AG04450 (cell line): ENCODE measurements at regions of chr10 and their contacts with region 1.

Region 1: DNA sequence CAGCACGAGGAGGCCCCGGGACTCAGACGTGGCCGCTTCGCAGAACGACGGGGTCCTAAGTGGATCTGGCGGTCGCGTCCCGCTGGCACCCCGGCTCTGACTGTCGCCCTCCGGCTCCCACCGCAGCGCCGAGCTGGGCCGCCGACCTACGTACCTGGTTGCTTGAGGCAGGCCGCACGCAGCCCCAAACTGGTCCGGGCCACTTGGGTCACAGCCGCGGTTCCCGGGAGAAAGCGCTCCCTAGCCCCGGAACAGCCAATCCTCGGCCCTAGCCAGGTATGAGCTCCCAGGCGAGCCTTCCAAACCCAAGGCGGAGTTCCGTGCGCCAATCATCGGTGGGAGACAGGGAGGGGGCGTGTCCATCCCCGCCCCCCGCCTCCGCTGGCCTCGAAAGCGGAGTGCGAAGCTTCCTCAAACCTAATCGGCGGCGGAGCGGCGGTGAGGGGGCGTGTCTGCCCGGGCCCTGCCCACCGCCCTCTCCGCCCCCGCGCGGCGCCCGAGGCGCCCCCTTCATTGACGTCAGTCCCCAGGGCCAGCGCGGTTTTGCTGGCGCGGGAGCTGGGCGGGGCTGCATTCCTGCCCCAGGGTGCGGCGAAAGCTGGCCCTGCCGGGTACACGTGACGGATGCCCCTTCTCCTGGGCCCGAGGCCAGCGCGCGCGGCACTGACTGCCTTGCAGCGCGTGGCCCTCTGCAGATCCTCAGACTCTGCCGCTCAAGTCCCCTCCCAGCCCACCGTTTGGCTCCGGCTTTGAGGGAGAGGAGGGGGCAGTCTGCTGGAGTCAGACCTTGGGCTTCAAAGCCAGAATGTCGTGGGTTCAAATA is at the start of gene AVPI1:
- DNase-seq: peak; percentile 91
- H3K4me3 ChIP-seq: peak within 1 kb of the TSS; percentile 71
- H3K27ac ChIP-seq: peak within 1 kb of the TSS; percentile 100
- H3K27me3 ChIP-seq: no peaks in the 10 kb centered on the region
- CTCF ChIP-seq: no peak
- polyA plus RNA-seq, gene AVPI1: 26.5 and 36.9 TPM in 2 replicates

Region 2: DNA sequence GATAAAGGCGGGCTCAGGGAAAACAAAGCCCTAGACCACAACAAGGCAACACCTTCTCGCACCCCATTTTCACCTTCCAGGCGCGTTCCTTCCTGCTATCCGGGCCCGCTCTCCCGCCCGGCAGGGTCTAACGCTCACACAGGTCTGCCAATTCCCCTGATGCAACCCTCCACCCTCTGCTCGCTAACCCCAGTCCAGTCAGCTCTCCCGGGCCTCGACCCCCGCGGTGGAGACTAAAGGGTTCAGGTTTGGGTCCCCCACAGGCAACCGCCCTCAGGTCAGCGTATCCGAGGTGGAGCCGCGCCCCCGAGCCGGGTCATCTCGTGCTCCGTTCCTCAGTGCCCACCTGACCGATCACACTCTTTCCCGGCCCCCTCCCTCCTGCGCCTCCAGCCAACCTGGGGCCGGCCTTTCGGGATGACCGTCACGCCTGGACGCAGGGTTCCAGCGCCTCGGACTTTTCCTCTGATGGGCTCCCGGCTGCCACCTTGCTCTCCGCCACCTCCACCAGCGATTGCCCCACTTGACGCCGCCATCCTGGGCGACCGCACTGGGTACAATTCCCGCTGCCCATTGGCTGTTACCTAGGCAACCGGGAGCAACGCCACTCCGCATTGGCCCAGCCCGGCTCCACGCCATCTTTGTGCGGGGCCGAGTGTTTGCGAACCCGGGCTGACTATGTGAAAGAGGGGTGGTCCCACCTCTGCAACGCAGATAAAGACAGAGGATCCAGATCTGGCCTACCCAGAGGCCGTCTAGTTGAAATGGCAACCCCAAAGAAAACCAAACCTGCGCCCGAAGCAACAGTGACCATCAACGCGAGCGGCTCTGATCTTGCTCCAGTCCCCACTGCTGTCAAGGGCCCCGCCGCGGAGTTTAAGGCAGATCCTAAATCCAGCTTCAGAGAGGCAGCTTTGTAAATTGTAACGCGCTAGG is 54.0 kb before region 1 on chr10 and contains the start of gene MORN4:
- CTCF ChIA-PET with region 1: no interaction called
- POLR2A ChIA-PET with region 1: no interaction called
- DNase-seq: peak; percentile 69
- H3K4me3 ChIP-seq: peak within 1 kb of the TSS; percentile 91
- H3K27ac ChIP-seq: peak within 1 kb of the TSS; percentile 3
- H3K27me3 ChIP-seq: no peaks in the 10 kb centered on the region
- CTCF ChIP-seq: no peak
- polyA plus RNA-seq, gene MORN4: 14.4 and 16.0 TPM in 2 replicates

Region 3: GRCh38 chr10:97648562-97649404 is 38.4 kb before region 1 on chr10:
- CTCF ChIA-PET with region 1: interaction called, 9 read pairs
- POLR2A ChIA-PET with region 1: interaction called, 10 read pairs
- DNase-seq: peak; percentile 59
- H3K4me3 ChIP-seq: no peak overlapping the region
- H3K27ac ChIP-seq: peak overlapping the region; percentile 67
- H3K27me3 ChIP-seq: no peaks in the 10 kb centered on the region
- CTCF ChIP-seq: no peak

Region 4: DNA sequence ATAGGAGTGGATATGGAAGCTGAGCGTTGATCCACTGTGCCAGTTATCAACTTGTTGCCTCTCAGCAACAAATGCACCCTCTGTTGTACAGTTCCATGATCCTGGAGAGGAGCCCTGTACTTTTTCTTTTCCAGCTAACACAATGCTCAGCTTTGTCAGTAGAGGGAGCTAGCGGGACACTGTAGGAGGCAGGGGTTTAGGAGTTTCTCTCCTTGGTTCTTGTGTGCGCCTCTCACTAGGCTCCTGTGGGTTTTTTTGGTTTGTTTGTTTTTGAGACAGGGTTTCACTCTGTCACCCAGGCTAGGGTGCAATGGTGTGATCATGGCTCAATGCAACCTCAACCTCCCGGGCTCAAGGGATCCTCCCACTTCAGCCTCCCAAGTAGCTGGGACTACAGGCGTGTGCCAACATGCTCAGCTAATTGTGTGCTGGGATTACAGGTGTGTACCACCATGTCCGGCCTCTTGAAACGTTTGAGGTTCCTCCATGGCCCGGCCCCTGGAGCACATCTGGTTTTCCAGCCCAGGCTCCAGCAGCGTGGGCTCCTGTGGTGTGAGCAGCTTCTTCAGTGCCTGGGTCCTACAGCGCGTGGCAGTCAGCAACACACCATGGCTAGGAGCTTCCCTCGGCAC is 14.4 kb after region 1 on chr10:
- CTCF ChIA-PET with region 1: interaction called, 71 read pairs
- POLR2A ChIA-PET with region 1: interaction called, 7 read pairs
- DNase-seq: peak; percentile 61
- H3K4me3 ChIP-seq: no peak overlapping the region
- H3K27ac ChIP-seq: no peak overlapping the region
- H3K27me3 ChIP-seq: no peaks in the 10 kb centered on the region
- CTCF ChIP-seq: peak; percentile 94

Region 5: DNA sequence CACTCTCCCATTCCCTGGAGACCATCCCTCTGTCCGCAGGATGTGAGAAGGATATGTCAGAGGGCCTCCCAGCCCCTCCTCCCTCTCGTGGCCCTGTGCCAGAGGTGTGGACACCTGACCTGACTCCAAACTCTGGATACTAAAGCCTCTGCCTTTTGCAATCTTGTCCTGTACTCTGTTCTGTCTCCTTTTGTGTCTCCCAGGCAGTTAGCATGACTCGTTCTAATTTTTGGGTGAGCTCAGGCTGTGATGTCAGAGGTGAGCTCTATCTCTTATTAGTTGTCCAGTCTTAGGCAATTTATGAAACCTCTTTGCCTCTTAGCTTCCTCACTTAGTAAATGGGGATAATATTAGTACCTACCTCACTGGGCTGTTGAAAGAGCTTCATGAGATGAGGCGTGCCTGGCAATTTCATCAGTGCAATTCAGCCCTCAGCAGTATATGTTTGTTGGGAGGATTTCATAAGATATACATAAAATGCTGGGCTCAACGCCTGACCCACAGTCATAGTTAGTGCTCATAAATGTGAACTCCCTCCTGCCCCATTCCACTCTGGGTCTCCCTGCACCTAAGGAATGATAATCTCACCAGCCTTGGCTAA is 37.3 kb after region 1 on chr10:
- CTCF ChIA-PET with region 1: interaction called, 4 read pairs
- POLR2A ChIA-PET with region 1: interaction called, 10 read pairs
- DNase-seq: no peak
- H3K4me3 ChIP-seq: no peak overlapping the region
- H3K27ac ChIP-seq: peak overlapping the region; percentile 31
- H3K27me3 ChIP-seq: no peaks in the 10 kb centered on the region
- CTCF ChIP-seq: no peak

Region 6: DNA sequence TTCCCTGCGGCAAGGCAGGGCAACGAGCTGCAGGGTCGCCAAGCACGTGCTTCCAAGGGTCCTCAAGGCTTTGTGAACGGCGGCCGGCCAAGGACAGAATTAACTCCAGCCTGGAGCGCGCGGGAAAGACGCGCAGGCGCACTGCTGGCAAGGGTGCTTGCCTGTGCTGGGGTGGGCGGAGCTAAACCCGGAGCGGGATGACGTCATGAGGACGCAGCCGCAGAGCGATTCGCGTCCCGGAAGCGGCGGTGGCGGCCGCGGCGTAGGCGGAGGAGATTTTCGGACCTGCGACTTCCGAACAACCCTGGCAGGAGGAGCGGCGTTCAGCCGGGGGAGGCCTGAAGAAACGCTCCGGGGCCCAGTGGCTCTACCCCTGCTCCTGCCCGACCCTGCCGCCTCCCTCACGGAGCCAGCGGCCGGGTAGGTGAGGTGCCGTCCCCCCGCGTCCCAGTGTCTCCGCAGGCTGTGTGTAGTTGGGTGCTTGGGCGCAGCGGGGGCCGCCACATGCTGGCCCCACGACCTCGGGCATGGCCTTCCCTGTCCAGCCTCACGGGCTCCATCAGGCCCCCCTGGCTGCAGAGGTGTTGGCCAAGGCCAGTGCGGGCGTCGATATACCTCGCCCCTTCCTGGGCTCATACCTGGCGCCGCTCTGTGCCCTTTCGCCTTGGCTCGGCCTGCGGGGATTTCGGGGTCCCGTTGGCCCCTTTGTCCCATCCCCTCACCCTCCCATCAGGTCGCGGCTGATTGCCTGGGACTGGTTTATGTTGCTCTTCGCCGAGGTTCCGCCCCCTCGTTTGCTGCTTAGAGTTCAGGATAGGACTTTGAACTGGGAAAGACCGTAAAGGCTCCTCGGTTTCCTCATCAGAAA is 50.0 kb after region 1 on chr10 and contains the start of gene ZFYVE27:
- CTCF ChIA-PET with region 1: interaction called, 31 read pairs
- POLR2A ChIA-PET with region 1: interaction called, 16 read pairs
- DNase-seq: peak; percentile 91
- H3K4me3 ChIP-seq: peak within 1 kb of the TSS; percentile 98
- H3K27ac ChIP-seq: peak within 1 kb of the TSS; percentile 91
- H3K27me3 ChIP-seq: no peaks in the 10 kb centered on the region
- CTCF ChIP-seq: no peak
- polyA plus RNA-seq, gene ZFYVE27: 11.1 and 13.5 TPM in 2 replicates

Region 7: DNA sequence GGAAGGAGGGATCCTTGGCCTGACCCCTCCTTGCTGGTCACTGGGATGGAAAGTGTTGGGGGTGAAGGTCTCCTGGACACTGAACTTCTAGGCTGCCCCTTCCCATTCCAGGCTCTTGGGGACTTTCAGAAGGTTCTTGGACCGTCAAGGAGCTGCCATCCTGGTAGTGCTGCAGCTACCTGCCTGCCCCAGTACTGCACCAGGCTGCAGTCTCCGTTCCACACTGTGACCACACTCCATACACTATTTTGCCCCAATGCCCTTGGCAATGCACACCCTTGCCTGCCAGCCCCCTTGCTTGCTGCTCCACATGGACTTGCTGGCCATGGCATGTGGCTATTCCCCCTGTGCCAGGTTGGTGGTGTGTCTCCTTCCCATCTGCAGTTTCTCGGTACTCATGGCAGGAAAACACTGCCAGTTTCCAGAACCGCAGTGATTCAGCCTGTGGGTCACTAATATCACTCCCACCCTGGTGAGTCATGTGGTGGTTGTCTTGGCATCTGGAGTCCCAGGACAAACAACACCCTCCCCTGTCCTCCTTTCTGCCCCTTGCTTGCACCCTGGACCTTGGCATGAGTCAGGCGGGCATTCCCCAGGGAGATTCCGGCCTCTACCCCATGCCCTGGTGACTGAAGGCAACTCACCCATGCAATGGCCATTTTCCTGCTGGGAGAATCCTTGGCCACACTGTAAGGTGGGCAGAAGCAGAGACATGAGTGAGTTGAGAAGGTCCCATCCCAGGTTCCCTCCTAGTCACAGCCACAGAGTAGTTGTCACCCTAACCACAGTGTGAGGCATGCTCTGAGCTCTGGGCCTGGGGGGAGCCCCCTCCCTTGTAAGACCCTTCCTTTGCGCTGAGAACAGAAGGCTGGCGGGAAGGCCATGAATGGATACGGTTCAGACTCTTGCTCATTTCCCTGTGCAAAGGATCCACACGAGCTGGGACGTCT is 195.2 kb after region 1 on chr10:
- CTCF ChIA-PET with region 1: no interaction called
- POLR2A ChIA-PET with region 1: no interaction called
- DNase-seq: no peak
- H3K4me3 ChIP-seq: no peak overlapping the region
- H3K27ac ChIP-seq: no peak overlapping the region
- H3K27me3 ChIP-seq: no peaks in the 10 kb centered on the region
- CTCF ChIP-seq: no peak